B cell (primary cell): ENCODE measurements at regions of chr11 and their contacts with region 1.

Region 1: GRCh38 chr11:33161120-33162005 is at the start of gene CSTF3:
- DNase-seq: peak; percentile 92
- ATAC-seq: peak; percentile 98
- H3K4me3 ChIP-seq: peak within 1 kb of the TSS; percentile 77 to 99 (median 78)
- H3K4me3 Mint-ChIP-seq: peak within 1 kb of the TSS; percentile 99
- H3K27ac ChIP-seq: peak within 1 kb of the TSS; percentile 84 to 88
- H3K27ac Mint-ChIP-seq: peak within 1 kb of the TSS; percentile 95
- H3K4me1 ChIP-seq: peaks cover 25 to 32% of the 10 kb centered on the region in 2 donors
- H3K4me1 Mint-ChIP-seq: peaks cover 49% of the 10 kb centered on the region
- H3K27me3 ChIP-seq: no peaks in the 10 kb centered on the region
- H3K27me3 Mint-ChIP-seq: no peaks in the 10 kb centered on the region
- CTCF ChIP-seq: no peak
- total RNA-seq, gene CSTF3: 38.8 and 42.2 TPM in 2 replicates

Region 2: DNA sequence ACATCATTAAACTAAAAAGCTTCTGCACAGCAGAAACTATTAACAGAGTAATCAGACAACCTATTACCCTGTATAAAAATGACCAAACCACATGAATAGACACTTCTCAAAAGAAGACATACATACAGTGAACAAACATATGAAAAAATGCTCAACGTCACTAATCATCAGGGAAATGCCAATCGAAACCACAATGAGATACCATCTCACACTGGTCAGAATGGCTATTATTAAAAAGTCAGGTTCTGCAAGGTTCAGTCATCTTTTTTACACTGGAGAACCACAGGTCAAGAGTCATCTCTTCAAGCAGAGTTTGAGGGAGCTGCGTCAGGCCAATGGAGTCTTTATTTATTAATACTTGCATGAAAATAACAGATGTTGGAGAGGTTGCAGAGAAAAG is 1030.1 kb before region 1 on chr11:
- CTCF ChIA-PET with region 1: no interaction called
- POLR2A ChIA-PET with region 1: no interaction called
- intact Hi-C with region 1: no loop called
- DNase-seq: no peak
- ATAC-seq: no peak
- H3K4me3 ChIP-seq: no peak overlapping the region
- H3K4me3 Mint-ChIP-seq: no peak overlapping the region
- H3K27ac ChIP-seq: no peak overlapping the region
- H3K27ac Mint-ChIP-seq: no peak overlapping the region
- H3K4me1 ChIP-seq: no peaks in the 10 kb centered on the region
- H3K4me1 Mint-ChIP-seq: no peaks in the 10 kb centered on the region
- H3K27me3 ChIP-seq: no peaks in the 10 kb centered on the region
- H3K27me3 Mint-ChIP-seq: peaks cover 12% of the 10 kb centered on the region
- CTCF ChIP-seq: no peak

Region 3: GRCh38 chr11:33039274-33040032 is 121.9 kb before region 1 on chr11 and contains the start of gene TCP11L1:
- CTCF ChIA-PET with region 1: interaction called, 3 read pairs
- POLR2A ChIA-PET with region 1: interaction called, 3 read pairs
- intact Hi-C with region 1: loop called (anchors 1 kb)
- DNase-seq: peak; percentile 90
- ATAC-seq: peak; percentile 84
- H3K4me3 ChIP-seq: peak within 1 kb of the TSS; percentile 77 to 99 (median 95)
- H3K4me3 Mint-ChIP-seq: peak within 1 kb of the TSS; percentile 96
- H3K27ac ChIP-seq: peak within 1 kb of the TSS; percentile 79 to 88
- H3K27ac Mint-ChIP-seq: peak within 1 kb of the TSS; percentile 94
- H3K4me1 ChIP-seq: peaks cover 8 to 18% of the 10 kb centered on the region in 2 donors
- H3K4me1 Mint-ChIP-seq: peaks cover 16% of the 10 kb centered on the region
- H3K27me3 ChIP-seq: no peaks in the 10 kb centered on the region
- H3K27me3 Mint-ChIP-seq: peaks cover 8% of the 10 kb centered on the region
- CTCF ChIP-seq: no peak
- total RNA-seq, gene TCP11L1: 19.7 and 19.8 TPM in 2 replicates

Region 4: DNA sequence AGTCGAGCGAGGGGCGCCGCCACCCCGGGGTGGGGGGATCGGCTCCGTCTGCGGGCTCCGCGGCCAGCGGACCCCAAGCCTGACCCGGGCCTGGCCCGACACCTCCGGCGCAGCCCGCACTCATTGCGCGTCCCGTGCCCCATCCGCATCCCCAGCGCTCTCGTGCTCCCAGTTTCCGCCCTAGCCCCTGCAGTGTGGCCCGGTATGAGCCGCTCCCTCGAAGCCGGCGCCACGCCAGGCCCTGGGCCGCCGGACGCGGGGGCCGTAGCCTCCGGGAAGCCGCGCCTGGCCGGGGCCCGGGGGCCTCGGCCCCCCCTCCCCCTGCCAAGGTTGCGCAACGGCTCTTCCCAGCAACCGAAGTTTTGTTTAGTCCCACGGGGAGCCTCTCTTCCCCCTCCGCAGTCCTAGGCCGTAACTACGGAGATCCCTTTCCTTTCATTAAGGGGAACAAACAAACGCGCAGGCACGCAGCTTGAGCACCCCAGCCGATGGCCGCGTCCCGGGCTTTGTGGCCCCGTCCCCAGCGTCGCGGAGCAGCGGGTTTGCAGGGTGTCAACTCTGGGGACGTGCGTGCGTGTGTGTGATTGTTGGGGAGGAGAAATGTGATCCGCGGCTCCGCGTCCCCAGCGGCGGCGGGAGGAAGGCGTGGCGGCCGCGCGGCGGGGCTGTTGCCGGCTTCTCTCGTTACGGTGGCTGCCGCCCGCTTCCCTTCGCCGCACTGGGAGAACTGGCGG is 96.7 kb after region 1 on chr11:
- CTCF ChIA-PET with region 1: interaction called, 5 read pairs
- POLR2A ChIA-PET with region 1: no interaction called
- intact Hi-C with region 1: loop called (anchors 1 kb)
- DNase-seq: peak; percentile 86
- ATAC-seq: peak; percentile 34
- H3K4me3 ChIP-seq: peak overlapping the region; percentile 78 to 97 (median 90)
- H3K4me3 Mint-ChIP-seq: peak overlapping the region; percentile 93
- H3K27ac ChIP-seq: peak overlapping the region; percentile 98 to 99
- H3K27ac Mint-ChIP-seq: peak overlapping the region; percentile 100
- H3K4me1 ChIP-seq: peaks cover 22 to 26% of the 10 kb centered on the region in 2 donors
- H3K4me1 Mint-ChIP-seq: peaks cover 49% of the 10 kb centered on the region
- H3K27me3 ChIP-seq: no peaks in the 10 kb centered on the region
- H3K27me3 Mint-ChIP-seq: no peaks in the 10 kb centered on the region
- CTCF ChIP-seq: no peak

Region 5: GRCh38 chr11:33329705-33330329 is 168.5 kb after region 1 on chr11:
- CTCF ChIA-PET with region 1: interaction called, 83 read pairs
- POLR2A ChIA-PET with region 1: no interaction called
- intact Hi-C with region 1: loop called (anchors 1 kb)
- DNase-seq: peak; percentile 62
- ATAC-seq: peak; percentile 49
- H3K4me3 ChIP-seq: no peak overlapping the region
- H3K4me3 Mint-ChIP-seq: no peak overlapping the region
- H3K27ac ChIP-seq: no peak overlapping the region
- H3K27ac Mint-ChIP-seq: no peak overlapping the region
- H3K4me1 ChIP-seq: peaks cover 0 to 4% of the 10 kb centered on the region in 2 donors
- H3K4me1 Mint-ChIP-seq: peaks cover 20% of the 10 kb centered on the region
- H3K27me3 ChIP-seq: no peaks in the 10 kb centered on the region
- H3K27me3 Mint-ChIP-seq: no peaks in the 10 kb centered on the region
- CTCF ChIP-seq: peak; percentile 81

Region 6: DNA sequence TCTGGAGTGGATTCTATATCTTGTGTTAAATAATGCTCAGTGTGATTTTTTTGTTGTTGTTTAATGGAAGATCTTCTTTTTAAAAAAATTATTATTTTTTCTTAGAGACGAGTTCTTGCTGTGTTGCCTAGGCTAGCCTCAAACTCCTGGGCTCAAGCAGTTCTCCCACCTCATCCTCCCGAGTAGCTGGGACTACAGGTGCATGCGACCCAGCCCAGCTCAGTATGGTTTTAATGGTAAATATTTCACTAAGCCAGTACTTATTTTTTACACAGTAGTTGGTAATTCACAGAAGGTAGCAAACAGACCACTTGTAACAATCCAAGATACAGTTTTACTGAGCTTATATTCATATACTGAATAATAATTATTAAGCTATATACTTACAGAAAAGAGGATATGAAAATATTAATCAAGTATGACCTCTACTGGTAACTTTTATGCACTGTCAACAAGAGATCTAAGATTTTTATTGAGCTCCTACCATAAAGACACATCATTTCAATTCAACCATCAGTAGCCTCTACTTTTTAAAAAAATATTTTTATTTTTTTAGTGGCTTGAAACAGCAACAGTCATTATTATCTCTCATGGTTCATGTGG is 581.0 kb after region 1 on chr11:
- CTCF ChIA-PET with region 1: interaction called, 21 read pairs
- POLR2A ChIA-PET with region 1: no interaction called
- intact Hi-C with region 1: loop called (anchors 1 kb)
- DNase-seq: peak; percentile 55
- ATAC-seq: peak; percentile 63
- H3K4me3 ChIP-seq: no peak overlapping the region
- H3K4me3 Mint-ChIP-seq: no peak overlapping the region
- H3K27ac ChIP-seq: no peak overlapping the region
- H3K27ac Mint-ChIP-seq: no peak overlapping the region
- H3K4me1 ChIP-seq: no peaks in the 10 kb centered on the region
- H3K4me1 Mint-ChIP-seq: no peaks in the 10 kb centered on the region
- H3K27me3 ChIP-seq: no peaks in the 10 kb centered on the region
- H3K27me3 Mint-ChIP-seq: no peaks in the 10 kb centered on the region
- CTCF ChIP-seq: peak; percentile 74

Region 7: GRCh38 chr11:34438529-34439507 is 1277.5 kb after region 1 on chr11 and contains the start of gene CAT:
- CTCF ChIA-PET with region 1: no interaction called
- POLR2A ChIA-PET with region 1: no interaction called
- intact Hi-C with region 1: loop called (anchors 5 kb)
- DNase-seq: peak; percentile 96
- ATAC-seq: peak; percentile 92
- H3K4me3 ChIP-seq: peak within 1 kb of the TSS; percentile 82 to 98 (median 88)
- H3K4me3 Mint-ChIP-seq: peak within 1 kb of the TSS; percentile 99
- H3K27ac ChIP-seq: peak within 1 kb of the TSS; percentile 75 to 85
- H3K27ac Mint-ChIP-seq: peak within 1 kb of the TSS; percentile 98
- H3K4me1 ChIP-seq: peaks cover 27 to 39% of the 10 kb centered on the region in 2 donors
- H3K4me1 Mint-ChIP-seq: peaks cover 44% of the 10 kb centered on the region
- H3K27me3 ChIP-seq: no peaks in the 10 kb centered on the region
- H3K27me3 Mint-ChIP-seq: no peaks in the 10 kb centered on the region
- CTCF ChIP-seq: no peak
- total RNA-seq, gene CAT: 83.2 and 88.8 TPM in 2 replicates